ENCODE measurements at regions of chr5 and their contacts with region 1.

Region 1: GRCh38 chr5:94830520-94830919 is 212.1 kb downstream of the SLF1 start:
- DNase-seq: peak; percentile 32
- H3K4me3 Mint-ChIP-seq: no peak overlapping the region
- H3K27ac Mint-ChIP-seq: no peak overlapping the region
- H3K4me1 Mint-ChIP-seq: no peaks in the 10 kb centered on the region
- H3K27me3 Mint-ChIP-seq: no peaks in the 10 kb centered on the region
- CTCF ChIP-seq: peak; percentile 22

Region 2: DNA sequence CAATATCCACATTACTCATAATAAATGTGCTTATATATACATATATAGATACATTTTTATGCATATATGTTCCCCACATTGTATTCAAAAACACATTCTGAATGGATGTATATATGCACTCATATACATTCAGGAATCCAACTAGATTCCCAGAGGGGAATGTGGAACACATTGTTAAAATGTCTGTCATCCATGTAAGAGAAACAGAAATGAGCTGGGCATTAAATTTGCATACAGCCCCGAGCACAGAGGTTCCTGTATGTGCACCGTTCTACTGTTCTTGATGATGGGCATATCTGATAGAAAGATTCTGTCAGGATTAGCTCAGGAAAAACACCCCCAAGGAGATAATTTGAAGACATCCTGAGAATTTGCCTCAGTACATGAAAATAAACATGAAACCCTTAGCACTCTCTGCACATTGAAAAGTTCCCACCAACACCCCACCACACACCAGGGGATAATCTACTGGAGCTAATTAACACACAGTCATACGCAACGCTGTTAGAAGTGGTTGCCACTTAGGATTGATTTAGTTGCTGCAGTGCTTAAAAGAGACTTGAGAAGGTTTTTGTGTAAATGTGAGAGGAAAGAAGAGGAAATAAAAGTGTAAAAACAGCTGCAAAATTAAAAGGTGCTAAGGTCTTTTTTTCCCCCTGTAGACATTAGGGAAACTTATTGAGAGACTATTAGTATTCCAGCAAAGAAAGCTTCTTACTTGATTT is 11.2 kb after region 1 on chr5:
- CTCF ChIA-PET with region 1: interaction called, 21 read pairs
- POLR2A ChIA-PET with region 1: no interaction called
- intact Hi-C with region 1: no loop called
- DNase-seq: no peak
- H3K4me3 Mint-ChIP-seq: no peak overlapping the region
- H3K27ac Mint-ChIP-seq: no peak overlapping the region
- H3K4me1 Mint-ChIP-seq: no peaks in the 10 kb centered on the region
- H3K27me3 Mint-ChIP-seq: no peaks in the 10 kb centered on the region
- CTCF ChIP-seq: no peak

Measured in MCF 10A (cell line).